ENCODE measurements at regions of chr3 and their contacts with region 1.

Region 1: DNA sequence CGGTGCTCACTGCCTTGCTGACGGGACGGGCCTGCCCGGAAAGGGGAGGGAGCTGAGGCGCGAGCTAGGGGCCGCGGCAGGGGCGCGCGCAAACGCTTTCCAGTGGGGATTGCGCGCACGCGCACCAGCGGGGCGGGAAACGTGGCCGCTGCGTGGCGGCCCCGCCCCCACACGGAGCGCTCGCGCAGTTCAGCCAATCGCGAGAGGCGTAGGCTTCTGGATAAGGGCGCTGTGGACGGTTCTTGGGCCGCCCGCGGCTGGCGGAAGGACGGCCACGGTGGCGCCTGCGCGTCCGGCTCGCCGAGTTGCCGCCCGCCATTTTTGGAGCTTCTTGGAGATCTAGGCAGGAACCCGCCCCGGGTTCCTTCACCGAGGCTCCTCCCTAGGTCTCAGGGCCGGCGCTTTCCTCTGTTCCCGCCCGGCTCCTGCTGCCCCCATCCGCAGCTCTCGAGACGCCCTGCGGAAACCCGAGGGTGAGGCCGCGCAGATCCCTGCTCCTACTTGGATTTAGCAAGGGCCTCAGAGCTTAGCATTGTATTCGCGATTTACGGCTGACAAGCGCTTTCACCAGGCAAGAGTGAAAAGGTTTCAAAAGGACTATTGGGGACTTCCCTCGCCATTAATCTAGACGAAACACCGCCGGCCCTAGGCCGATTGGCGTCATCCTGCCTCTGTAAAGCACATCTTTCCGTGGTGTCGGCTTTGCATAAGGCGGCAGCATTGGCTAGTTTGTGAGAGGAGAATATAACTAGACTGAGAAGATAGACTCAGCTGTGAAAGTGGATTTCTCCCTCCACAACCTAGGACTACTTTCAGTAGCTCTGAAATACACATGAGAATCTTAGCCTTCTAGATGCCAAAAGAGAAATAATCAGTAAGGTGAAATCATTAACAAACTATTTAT is 496 bp upstream of the STAG1 start:
- DNase-seq: peak; percentile 99
- H3K4me3 Mint-ChIP-seq: peak overlapping the region; percentile 83
- H3K27ac Mint-ChIP-seq: peak overlapping the region; percentile 93
- H3K4me1 Mint-ChIP-seq: peaks cover 40% of the 10 kb centered on the region
- H3K27me3 Mint-ChIP-seq: no peaks in the 10 kb centered on the region

Region 2: GRCh38 chr3:136250226-136250902 is 502.3 kb before region 1 on chr3 and contains the start of gene PCCB:
- CTCF ChIA-PET with region 1: interaction called, 21 read pairs
- POLR2A ChIA-PET with region 1: interaction called, 26 read pairs
- DNase-seq: peak; percentile 93
- H3K4me3 Mint-ChIP-seq: peak within 1 kb of the TSS; percentile 83
- H3K27ac Mint-ChIP-seq: peak within 1 kb of the TSS; percentile 82
- H3K4me1 Mint-ChIP-seq: peaks cover 23% of the 10 kb centered on the region
- H3K27me3 Mint-ChIP-seq: no peaks in the 10 kb centered on the region
- total RNA-seq, gene PCCB: 24.7 to 26.9 TPM

Region 3: GRCh38 chr3:136366289-136366688 is 386.4 kb before region 1 on chr3:
- CTCF ChIA-PET with region 1: interaction called, 10 read pairs
- POLR2A ChIA-PET with region 1: no interaction called
- DNase-seq: no peak
- H3K4me3 Mint-ChIP-seq: no peak overlapping the region
- H3K27ac Mint-ChIP-seq: no peak overlapping the region
- H3K4me1 Mint-ChIP-seq: no peaks in the 10 kb centered on the region
- H3K27me3 Mint-ChIP-seq: no peaks in the 10 kb centered on the region

Region 4: GRCh38 chr3:136396916-136397315 is 355.8 kb before region 1 on chr3:
- CTCF ChIA-PET with region 1: interaction called, 93 read pairs
- POLR2A ChIA-PET with region 1: interaction called, 16 read pairs
- DNase-seq: no peak
- H3K4me3 Mint-ChIP-seq: no peak overlapping the region
- H3K27ac Mint-ChIP-seq: no peak overlapping the region
- H3K4me1 Mint-ChIP-seq: no peaks in the 10 kb centered on the region
- H3K27me3 Mint-ChIP-seq: no peaks in the 10 kb centered on the region

Region 5: GRCh38 chr3:136642745-136643144 is 109.9 kb before region 1 on chr3:
- CTCF ChIA-PET with region 1: no interaction called
- POLR2A ChIA-PET with region 1: no interaction called
- DNase-seq: no peak
- H3K4me3 Mint-ChIP-seq: no peak overlapping the region
- H3K27ac Mint-ChIP-seq: no peak overlapping the region
- H3K4me1 Mint-ChIP-seq: peaks cover 6% of the 10 kb centered on the region
- H3K27me3 Mint-ChIP-seq: no peaks in the 10 kb centered on the region

Region 6: DNA sequence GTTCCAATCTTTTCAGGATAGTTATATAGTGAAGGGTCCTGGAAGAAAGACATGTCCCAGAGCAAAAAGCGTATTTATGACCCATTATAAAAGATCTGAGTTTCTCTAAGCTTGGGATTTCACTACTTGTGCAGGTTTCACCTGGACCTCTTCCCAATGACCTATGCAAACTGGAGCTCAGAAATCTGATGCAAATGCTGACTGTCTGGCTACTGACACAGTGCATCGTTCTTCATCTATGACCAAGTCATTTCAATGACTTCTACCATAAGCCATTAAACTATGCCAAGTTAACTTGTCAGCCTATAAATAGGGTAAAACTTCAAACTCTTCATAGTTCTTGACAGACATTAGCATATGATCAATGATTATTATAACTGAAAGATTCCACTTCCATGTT is 11.6 kb before region 1 on chr3:
- CTCF ChIA-PET with region 1: interaction called, 9 read pairs
- POLR2A ChIA-PET with region 1: interaction called, 13 read pairs
- DNase-seq: no peak
- H3K4me3 Mint-ChIP-seq: no peak overlapping the region
- H3K27ac Mint-ChIP-seq: no peak overlapping the region
- H3K4me1 Mint-ChIP-seq: peaks cover 28% of the 10 kb centered on the region
- H3K27me3 Mint-ChIP-seq: no peaks in the 10 kb centered on the region

Region 7: GRCh38 chr3:136804813-136805212 is 52.1 kb after region 1 on chr3:
- CTCF ChIA-PET with region 1: no interaction called
- POLR2A ChIA-PET with region 1: no interaction called
- DNase-seq: no peak
- H3K4me3 Mint-ChIP-seq: no peak overlapping the region
- H3K27ac Mint-ChIP-seq: no peak overlapping the region
- H3K4me1 Mint-ChIP-seq: peaks cover 4% of the 10 kb centered on the region
- H3K27me3 Mint-ChIP-seq: no peaks in the 10 kb centered on the region

Region 8: GRCh38 chr3:136861890-136862616 is 109.4 kb after region 1 on chr3 and contains the start of gene NCK1:
- CTCF ChIA-PET with region 1: interaction called, 77 read pairs
- POLR2A ChIA-PET with region 1: interaction called, 132 read pairs
- DNase-seq: peak; percentile 99
- H3K4me3 Mint-ChIP-seq: peak within 1 kb of the TSS; percentile 97
- H3K27ac Mint-ChIP-seq: peak within 1 kb of the TSS; percentile 98
- H3K4me1 Mint-ChIP-seq: peaks cover 55% of the 10 kb centered on the region
- H3K27me3 Mint-ChIP-seq: no peaks in the 10 kb centered on the region
- total RNA-seq, gene NCK1: 50.8 to 51.3 TPM

Region 9: DNA sequence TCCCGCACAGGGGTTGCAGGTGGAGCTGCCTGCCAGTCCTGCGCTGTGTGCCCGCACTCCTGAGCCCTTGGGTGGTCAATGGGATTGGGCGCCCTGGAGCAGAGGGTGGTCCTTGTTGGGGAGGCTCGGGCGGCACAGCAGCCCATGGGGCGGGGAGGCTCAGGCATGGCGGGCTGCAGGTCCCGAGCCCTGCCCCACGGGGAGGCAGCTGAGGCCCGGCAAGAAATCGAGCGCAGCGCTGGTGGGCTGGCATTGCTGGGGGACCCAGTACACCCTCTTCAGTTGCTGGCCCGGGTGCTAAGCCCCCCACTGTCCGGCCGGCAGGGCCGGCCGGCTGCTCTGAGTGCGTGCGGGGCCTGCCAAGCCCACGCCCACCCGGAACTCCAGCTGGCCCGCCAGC is 137.3 kb after region 1 on chr3:
- CTCF ChIA-PET with region 1: no interaction called
- POLR2A ChIA-PET with region 1: no interaction called
- DNase-seq: no peak
- H3K4me3 Mint-ChIP-seq: no peak overlapping the region
- H3K27ac Mint-ChIP-seq: no peak overlapping the region
- H3K4me1 Mint-ChIP-seq: peaks cover 42% of the 10 kb centered on the region
- H3K27me3 Mint-ChIP-seq: no peaks in the 10 kb centered on the region

Region 10: GRCh38 chr3:137032465-137033120 is 279.9 kb after region 1 on chr3:
- CTCF ChIA-PET with region 1: interaction called, 14 read pairs
- POLR2A ChIA-PET with region 1: interaction called, 4 read pairs
- DNase-seq: peak; percentile 76
- H3K4me3 Mint-ChIP-seq: no peak overlapping the region
- H3K27ac Mint-ChIP-seq: no peak overlapping the region
- H3K4me1 Mint-ChIP-seq: peaks cover 7% of the 10 kb centered on the region
- H3K27me3 Mint-ChIP-seq: peaks cover 13% of the 10 kb centered on the region

Measured in activated CD4-positive, alpha-beta memory T cell treated with anti-CD3 and anti-CD28 coated beads, Interleukin-2, amount 10 ng/mL, durations not matched to agents 7 days and 5 days (primary cell).